A673 (cell line): ENCODE measurements at regions of chr9 and their contacts with region 1.

Region 1: DNA sequence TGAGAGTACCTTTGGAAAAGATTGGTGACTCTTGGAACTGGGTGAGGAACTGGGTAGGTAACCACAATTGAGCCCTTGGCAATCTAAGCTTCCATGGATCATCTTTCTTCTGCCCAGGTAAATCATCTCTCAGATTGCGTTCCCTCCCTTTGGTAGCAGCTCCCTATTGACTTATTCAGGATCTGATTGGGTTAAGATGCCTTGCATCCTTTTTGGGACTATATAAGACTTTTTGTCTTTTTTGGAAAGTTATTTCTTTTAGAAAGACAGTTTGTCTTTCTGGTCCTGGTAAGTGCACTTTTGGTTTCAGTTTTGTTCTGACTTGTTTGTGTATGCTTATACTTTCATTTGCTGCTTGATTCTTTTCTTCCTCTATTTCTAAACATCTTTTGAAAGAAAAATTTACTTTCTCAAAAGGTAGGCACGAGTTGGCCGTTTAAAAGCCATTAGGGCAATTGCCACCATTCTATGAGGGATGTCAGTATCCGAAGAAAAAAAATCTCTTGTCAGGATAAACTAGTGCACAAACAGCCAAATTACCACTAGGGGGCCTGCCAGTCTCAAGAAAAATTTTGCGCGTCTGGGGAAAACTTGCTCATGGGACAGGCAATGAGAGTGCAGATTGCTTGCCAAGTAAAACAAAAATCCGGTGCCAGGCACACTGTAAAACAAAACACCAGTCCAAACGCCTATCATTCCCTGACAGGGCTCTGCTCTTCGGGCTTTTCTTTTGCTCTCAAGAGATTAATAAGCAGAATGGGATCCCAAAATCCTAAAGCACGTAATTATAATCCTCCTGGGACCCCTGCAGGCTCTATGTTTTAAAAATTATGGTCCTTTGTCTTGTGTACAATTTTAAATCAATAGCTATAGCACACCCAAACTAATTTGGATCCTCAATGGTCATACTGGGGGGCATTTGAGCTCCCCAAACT is 12.8 kb downstream of the OR1J1 start:
- DNase-seq: peak; percentile 91
- H3K4me3 ChIP-seq: peak overlapping the region; percentile 50
- H3K27ac ChIP-seq: no peak overlapping the region
- H3K4me1 ChIP-seq: no peaks in the 10 kb centered on the region
- H3K27me3 ChIP-seq: peaks cover 43% of the 10 kb centered on the region
- CTCF ChIP-seq: peak; percentile 85

Region 2: DNA sequence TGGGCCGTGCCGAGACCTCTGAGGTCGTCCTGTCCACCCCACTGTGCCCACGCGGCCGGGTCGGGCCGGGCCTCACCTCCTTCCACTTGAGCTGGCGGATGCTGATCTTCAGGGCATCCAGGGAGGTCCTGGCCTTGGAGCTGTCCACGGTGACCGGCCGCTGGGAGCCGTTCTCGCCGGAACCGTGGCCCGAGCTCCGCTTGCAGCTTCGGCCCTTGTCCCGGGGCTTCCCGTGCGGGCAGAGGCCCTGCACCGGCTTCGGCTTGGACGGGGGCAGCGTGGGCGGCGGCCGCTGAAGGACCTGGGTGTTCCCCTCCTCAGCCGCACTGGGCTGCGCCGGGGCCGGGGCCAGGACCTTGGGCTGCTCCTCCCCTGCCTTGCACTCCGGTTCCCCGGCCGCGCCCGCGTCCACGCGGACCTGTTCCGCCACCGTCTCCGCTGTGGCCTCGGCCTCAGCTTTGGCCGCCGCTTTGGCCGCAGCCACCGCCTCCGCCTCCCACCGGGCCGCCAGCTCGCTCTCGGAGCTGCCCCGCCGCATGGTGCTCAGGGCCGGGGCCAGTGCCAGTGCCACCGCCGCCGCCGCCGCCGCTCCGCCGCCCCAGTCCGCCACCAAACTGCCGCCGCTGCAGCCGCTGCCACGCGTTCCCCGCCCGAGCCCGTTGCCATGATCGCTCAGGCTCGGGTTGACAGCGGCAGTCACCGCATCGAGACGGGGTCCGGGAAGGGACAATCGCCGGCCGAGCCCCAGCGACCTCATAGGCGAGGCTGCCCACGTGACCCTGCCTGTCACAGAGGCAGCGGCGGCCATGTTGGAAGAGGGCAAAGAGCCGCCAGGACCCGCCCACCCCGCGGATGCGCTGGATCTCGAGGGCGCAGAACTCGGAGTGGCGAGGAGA is 372.0 kb before region 1 on chr9 and contains the start of gene TTLL11:
- CTCF ChIA-PET with region 1: no interaction called
- POLR2A ChIA-PET with region 1: no interaction called
- intact Hi-C with region 1: no loop called
- DNase-seq: peak; percentile 97
- H3K4me3 ChIP-seq: peak within 1 kb of the TSS; percentile 98
- H3K27ac ChIP-seq: peak within 1 kb of the TSS; percentile 27
- H3K4me1 ChIP-seq: peaks cover 4% of the 10 kb centered on the region
- H3K27me3 ChIP-seq: no peaks in the 10 kb centered on the region
- CTCF ChIP-seq: no peak
- total RNA-seq, gene TTLL11: 3.0 and 5.4 TPM in 2 replicates

Region 3: DNA sequence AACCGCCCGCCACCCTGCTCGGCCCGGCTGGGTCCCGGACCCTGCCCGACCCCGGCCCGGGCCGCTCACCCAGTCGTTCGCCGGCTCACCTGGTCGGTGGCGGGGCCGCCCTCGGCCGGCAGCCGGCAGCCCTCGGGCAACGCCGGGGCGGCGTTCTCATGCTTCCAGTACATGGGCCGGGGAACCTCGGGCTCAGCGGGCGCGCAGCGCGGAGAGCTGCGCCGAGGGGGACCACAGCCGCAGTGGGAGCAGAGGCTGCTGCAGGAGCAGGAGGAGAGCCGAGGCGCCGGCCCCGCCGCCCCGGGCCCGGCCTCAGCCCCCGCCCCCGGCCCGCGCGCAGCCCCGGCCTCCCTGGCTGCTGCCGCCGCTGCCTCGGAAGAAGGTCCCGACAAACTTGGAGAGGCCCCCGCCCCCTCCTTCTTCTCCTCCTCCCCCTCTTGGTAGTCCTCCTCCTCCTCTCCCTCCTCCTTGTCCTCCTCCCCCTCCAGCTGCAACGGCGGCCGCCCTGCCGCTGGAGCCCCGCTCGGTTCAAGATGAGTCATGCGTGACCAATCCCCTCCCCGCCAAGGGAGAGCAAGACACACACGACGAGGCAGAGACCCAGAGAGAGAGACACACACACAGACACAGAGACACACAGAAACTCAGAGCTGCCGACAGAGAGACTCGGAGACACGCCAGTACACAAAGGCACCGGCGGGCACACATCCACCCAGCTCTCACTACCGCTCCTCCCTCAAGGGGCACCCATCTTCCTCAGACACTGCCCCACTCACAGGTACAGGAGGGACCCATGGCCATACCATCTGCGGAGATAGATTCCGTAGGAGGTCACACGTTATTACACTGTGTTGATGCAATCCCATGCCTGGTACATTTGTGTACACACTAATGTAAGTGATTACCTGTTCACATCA is 236.1 kb before region 1 on chr9 and contains the start of gene LHX6:
- CTCF ChIA-PET with region 1: no interaction called
- POLR2A ChIA-PET with region 1: no interaction called
- intact Hi-C with region 1: no loop called
- DNase-seq: no peak
- H3K4me3 ChIP-seq: peak within 1 kb of the TSS; percentile 41
- H3K27ac ChIP-seq: no peak within 1 kb of the TSS
- H3K4me1 ChIP-seq: no peaks in the 10 kb centered on the region
- H3K27me3 ChIP-seq: peaks cover 97% of the 10 kb centered on the region
- CTCF ChIP-seq: no peak
- total RNA-seq, gene LHX6: not detected in 2 replicates

Region 4: GRCh38 chr9:122526600-122526999 is 61.7 kb after region 1 on chr9:
- CTCF ChIA-PET with region 1: no interaction called
- POLR2A ChIA-PET with region 1: no interaction called
- intact Hi-C with region 1: no loop called
- DNase-seq: no peak
- H3K4me3 ChIP-seq: no peak overlapping the region
- H3K27ac ChIP-seq: no peak overlapping the region
- H3K4me1 ChIP-seq: no peaks in the 10 kb centered on the region
- H3K27me3 ChIP-seq: peaks cover 41% of the 10 kb centered on the region
- CTCF ChIP-seq: no peak

Region 5: GRCh38 chr9:122810306-122810946 is 345.5 kb after region 1 on chr9:
- CTCF ChIA-PET with region 1: interaction called, 5 read pairs
- POLR2A ChIA-PET with region 1: interaction called, 7 read pairs
- intact Hi-C with region 1: loop called (anchors 1 kb)
- DNase-seq: peak; percentile 86
- H3K4me3 ChIP-seq: no peak overlapping the region
- H3K27ac ChIP-seq: no peak overlapping the region
- H3K4me1 ChIP-seq: no peaks in the 10 kb centered on the region
- H3K27me3 ChIP-seq: no peaks in the 10 kb centered on the region
- CTCF ChIP-seq: peak; percentile 82

Region 6: GRCh38 chr9:122991370-122991830 is 526.5 kb after region 1 on chr9:
- CTCF ChIA-PET with region 1: no interaction called
- POLR2A ChIA-PET with region 1: no interaction called
- intact Hi-C with region 1: loop called (anchors 10 kb)
- DNase-seq: peak; percentile 83
- H3K4me3 ChIP-seq: no peak overlapping the region
- H3K27ac ChIP-seq: no peak overlapping the region
- H3K4me1 ChIP-seq: peaks cover 9% of the 10 kb centered on the region
- H3K27me3 ChIP-seq: no peaks in the 10 kb centered on the region
- CTCF ChIP-seq: peak; percentile 82

Region 7: GRCh38 chr9:123081824-123082223 is 616.9 kb after region 1 on chr9:
- CTCF ChIA-PET with region 1: no interaction called
- POLR2A ChIA-PET with region 1: no interaction called
- intact Hi-C with region 1: loop called (anchors 10 kb)
- DNase-seq: peak; percentile 78
- H3K4me3 ChIP-seq: no peak overlapping the region
- H3K27ac ChIP-seq: peak overlapping the region; percentile 40
- H3K4me1 ChIP-seq: peaks cover 43% of the 10 kb centered on the region
- H3K27me3 ChIP-seq: no peaks in the 10 kb centered on the region
- CTCF ChIP-seq: peak; percentile 81

Region 8: GRCh38 chr9:123389070-123389469 is 924.2 kb after region 1 on chr9:
- CTCF ChIA-PET with region 1: no interaction called
- POLR2A ChIA-PET with region 1: no interaction called
- intact Hi-C with region 1: loop called (anchors 10 kb)
- DNase-seq: no peak
- H3K4me3 ChIP-seq: no peak overlapping the region
- H3K27ac ChIP-seq: no peak overlapping the region
- H3K4me1 ChIP-seq: no peaks in the 10 kb centered on the region
- H3K27me3 ChIP-seq: no peaks in the 10 kb centered on the region
- CTCF ChIP-seq: no peak